Left ventricle myocardium superior (tissue), 1 donor: ENCODE measurements at regions of chr11 and their contacts with region 1.

Region 1: DNA sequence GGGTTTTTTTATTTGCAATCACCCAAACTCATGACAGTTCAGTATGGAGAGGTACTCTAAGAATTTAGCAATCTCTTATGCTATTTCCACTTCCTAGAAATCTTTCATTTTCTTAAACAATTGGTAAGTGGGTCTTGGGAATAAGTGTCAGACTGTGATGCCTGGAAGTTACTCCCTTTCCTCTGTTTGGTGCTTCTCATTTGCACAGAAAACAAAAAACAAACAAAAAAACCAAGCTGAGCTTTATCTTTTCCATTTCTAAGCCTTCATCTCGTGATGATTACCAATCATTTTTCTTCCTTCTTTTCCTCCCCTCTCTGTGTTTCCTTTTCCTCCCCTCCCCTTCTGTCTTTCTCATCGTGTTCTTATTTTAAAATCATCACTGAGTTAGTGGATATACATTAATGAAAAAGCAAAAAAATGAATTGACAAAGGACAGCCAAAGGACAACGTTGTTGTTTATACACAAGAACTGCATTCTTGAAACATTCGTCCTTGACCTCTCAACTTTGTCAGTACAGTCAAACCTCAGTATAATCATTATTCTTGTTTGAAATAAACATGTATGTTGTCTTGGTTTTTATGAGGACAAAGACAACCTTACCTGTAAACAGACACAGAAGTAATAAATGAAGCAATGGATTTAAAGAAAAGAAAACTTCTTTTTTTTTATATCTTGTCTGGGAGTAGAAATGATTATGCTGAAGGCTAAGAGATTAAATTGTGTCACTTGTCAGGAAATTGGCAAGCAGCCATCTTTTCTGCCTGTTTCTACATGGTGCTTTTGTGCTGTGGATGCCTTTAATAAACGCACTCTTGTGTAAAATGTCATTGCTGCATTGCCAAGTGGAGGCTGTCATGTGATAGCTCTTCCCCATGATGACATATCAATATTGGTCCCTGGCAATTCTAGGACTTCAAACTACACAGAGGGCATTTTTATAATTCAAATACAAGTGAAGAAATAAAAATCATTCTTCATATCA is 803.2 kb upstream of the CCDC90B start:
- DNase-seq: no peak
- ATAC-seq: peak; percentile 15

Region 2: GRCh38 chr11:83990160-83990733 is 99.1 kb before region 1 on chr11:
- intact Hi-C with region 1: loop called (anchors 5 kb)
- DNase-seq: peak; percentile 35
- ATAC-seq: peak; percentile 73

Region 3: DNA sequence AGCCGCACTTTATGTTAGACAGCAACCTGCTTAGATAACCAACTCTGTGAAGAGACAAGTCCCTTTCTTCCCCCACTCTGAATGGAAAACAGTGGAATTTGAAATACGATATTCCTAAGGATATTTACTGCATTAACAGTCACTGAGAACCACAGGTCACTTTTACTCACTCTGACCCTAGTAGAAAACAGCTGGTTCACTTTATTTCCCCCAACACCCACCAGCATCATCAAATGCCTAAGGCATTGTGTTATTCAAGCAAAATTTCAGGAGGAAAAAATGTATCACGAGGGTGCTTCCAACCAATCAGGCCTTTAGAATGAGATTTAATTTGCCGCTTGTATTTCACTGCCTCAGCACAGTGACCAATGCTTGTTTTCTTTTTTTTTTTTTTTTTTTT is 330.9 kb after region 1 on chr11:
- intact Hi-C with region 1: no loop called
- DNase-seq: no peak
- ATAC-seq: no peak

Region 4: GRCh38 chr11:85109141-85109540 is 1019.8 kb after region 1 on chr11:
- intact Hi-C with region 1: no loop called
- DNase-seq: no peak
- ATAC-seq: no peak